Activated T-helper 1 cell treated with anti-CD3 and anti-CD28 coated beads, Interleukin-12 subunit alpha, Interleukin-12 subunit beta, Interleukin-2, Interleukin-4 antibody, amounts not matched to agents 30 ng/mL and 10 ng/mL and 1 ng/mL, durations not matched to agents 14 hours and 24 hours and 36 hours (primary cell): ENCODE measurements at regions of chr12 and their contacts with region 1.

Region 1: GRCh38 chr12:89040146-89040964 is 311.9 kb downstream of the DUSP6 start:
- DNase-seq: peak; percentile 79
- H3K4me3 Mint-ChIP-seq: peak overlapping the region; percentile 61
- H3K27ac Mint-ChIP-seq: peak overlapping the region; percentile 95
- H3K4me1 Mint-ChIP-seq: peaks cover 65% of the 10 kb centered on the region
- H3K27me3 Mint-ChIP-seq: no peaks in the 10 kb centered on the region

Region 2: GRCh38 chr12:88299567-88300101 is 740.7 kb before region 1 on chr12:
- intact Hi-C with region 1: loop called (anchors 1 kb)
- DNase-seq: peak; percentile 29
- H3K4me3 Mint-ChIP-seq: no peak overlapping the region
- H3K27ac Mint-ChIP-seq: peak overlapping the region; percentile 76
- H3K4me1 Mint-ChIP-seq: peaks cover 35% of the 10 kb centered on the region
- H3K27me3 Mint-ChIP-seq: no peaks in the 10 kb centered on the region

Region 3: DNA sequence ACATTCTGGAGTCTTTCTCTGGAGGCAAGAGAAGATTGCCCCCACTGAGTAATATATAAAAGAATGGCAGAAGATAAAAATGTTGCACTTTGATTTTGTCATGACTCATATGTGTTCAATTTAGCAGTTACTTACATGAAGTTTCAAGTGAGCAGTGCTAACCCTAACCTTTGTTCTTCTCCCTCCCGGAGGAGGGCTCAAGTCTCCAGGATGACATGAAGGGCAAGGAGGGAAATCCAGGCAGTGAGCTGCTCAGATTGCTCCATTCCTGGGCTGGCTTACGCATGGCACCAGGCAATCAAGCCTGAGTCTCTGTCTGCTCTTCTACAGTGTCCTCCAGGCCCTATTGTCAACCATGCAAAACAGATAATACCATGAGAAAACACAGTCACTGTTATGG is 10.4 kb before region 1 on chr12:
- intact Hi-C with region 1: no loop called
- DNase-seq: no peak
- H3K4me3 Mint-ChIP-seq: no peak overlapping the region
- H3K27ac Mint-ChIP-seq: no peak overlapping the region
- H3K4me1 Mint-ChIP-seq: peaks cover 21% of the 10 kb centered on the region
- H3K27me3 Mint-ChIP-seq: peaks cover 5% of the 10 kb centered on the region

Region 4: DNA sequence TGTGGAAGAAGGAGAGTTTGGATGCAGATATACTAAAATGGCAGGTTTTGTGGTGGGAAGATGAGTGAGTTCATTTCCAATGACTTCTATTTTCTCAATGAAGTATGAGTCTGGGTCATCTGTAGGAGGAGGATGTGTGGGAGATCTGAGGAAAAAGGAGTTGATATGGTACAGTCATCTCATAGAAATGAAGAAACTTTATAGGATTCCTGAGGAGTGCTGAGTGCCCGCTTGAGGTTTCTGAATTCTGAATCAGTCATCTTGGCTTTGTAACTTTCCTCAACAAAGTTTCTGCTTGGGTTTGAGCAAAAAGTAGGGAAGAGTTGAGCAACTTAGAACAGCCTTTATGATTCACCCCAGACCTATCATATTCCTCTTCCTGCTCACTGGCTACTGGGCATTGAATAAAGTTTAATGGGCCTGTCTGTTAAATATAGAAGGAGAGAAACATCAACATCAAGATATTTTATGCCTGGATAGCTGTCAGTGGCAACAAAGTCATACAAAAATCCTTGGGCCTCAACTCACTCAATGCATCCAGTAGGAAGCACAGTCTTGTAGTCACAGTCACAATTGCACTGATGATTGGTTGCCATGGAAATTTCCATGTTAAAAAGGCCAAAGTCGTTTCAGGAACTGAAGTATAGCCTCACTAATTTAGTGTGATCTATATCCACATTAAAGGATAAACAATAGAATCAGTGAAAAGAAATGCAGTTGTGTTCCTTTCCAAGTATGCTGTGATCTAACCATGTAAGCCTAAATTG is 27.2 kb after region 1 on chr12:
- intact Hi-C with region 1: loop called (anchors 1 kb)
- DNase-seq: no peak
- H3K4me3 Mint-ChIP-seq: no peak overlapping the region
- H3K27ac Mint-ChIP-seq: peak overlapping the region; percentile 20
- H3K4me1 Mint-ChIP-seq: peaks cover 46% of the 10 kb centered on the region
- H3K27me3 Mint-ChIP-seq: no peaks in the 10 kb centered on the region

Region 5: GRCh38 chr12:89244536-89244935 is 204.2 kb after region 1 on chr12:
- intact Hi-C with region 1: loop called (anchors 1 kb)
- DNase-seq: peak; percentile 45
- H3K4me3 Mint-ChIP-seq: peak overlapping the region; percentile 32
- H3K27ac Mint-ChIP-seq: peak overlapping the region; percentile 84
- H3K4me1 Mint-ChIP-seq: peaks cover 53% of the 10 kb centered on the region
- H3K27me3 Mint-ChIP-seq: no peaks in the 10 kb centered on the region

Region 6: GRCh38 chr12:89470741-89471509 is 430.6 kb after region 1 on chr12:
- intact Hi-C with region 1: loop called (anchors 1 kb)
- DNase-seq: no peak
- H3K4me3 Mint-ChIP-seq: no peak overlapping the region
- H3K27ac Mint-ChIP-seq: peak overlapping the region; percentile 22
- H3K4me1 Mint-ChIP-seq: peaks cover 76% of the 10 kb centered on the region
- H3K27me3 Mint-ChIP-seq: no peaks in the 10 kb centered on the region

Region 7: DNA sequence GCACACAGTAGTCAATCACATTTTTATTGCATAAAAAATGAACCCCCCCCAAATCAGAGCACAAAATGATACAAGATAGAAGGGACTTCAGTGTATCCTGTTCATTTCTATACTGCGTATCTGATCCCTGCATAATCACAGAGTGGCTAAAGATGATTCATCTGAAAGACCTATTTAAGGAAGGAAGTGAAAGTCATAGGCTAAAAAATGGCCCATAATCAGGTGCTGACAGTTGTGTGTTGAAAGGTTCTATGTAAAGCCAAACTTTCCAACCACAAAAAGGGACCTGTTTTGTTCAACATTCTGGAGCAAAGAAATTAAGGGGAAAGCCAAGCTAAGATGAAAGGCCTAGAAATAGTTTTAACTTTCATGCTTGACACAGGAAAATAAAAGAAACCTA is 816.1 kb after region 1 on chr12:
- intact Hi-C with region 1: loop called (anchors 2 kb)
- DNase-seq: no peak
- H3K4me3 Mint-ChIP-seq: peak overlapping the region; percentile 25
- H3K27ac Mint-ChIP-seq: peak overlapping the region; percentile 62
- H3K4me1 Mint-ChIP-seq: peaks cover 40% of the 10 kb centered on the region
- H3K27me3 Mint-ChIP-seq: no peaks in the 10 kb centered on the region